PC-3 (cell line): ENCODE measurements at regions of chr17 and their contacts with region 1.

Region 1: GRCh38 chr17:78019367-78019975 is 61.0 kb downstream of the TNRC6C start:
- DNase-seq: peak; percentile 73
- ATAC-seq: peak; percentile 59; the same call in 1 of the 2 replicates
- H3K4me3 ChIP-seq: no peak overlapping the region
- H3K27ac ChIP-seq: no peak overlapping the region
- H3K4me1 ChIP-seq: no peaks in the 10 kb centered on the region
- H3K27me3 ChIP-seq: 0 out of 2 replicates have a peak, but pooled peaks cover 3% of the 10 kb centered on the region
- CTCF ChIP-seq: peak; percentile 80

Region 2: DNA sequence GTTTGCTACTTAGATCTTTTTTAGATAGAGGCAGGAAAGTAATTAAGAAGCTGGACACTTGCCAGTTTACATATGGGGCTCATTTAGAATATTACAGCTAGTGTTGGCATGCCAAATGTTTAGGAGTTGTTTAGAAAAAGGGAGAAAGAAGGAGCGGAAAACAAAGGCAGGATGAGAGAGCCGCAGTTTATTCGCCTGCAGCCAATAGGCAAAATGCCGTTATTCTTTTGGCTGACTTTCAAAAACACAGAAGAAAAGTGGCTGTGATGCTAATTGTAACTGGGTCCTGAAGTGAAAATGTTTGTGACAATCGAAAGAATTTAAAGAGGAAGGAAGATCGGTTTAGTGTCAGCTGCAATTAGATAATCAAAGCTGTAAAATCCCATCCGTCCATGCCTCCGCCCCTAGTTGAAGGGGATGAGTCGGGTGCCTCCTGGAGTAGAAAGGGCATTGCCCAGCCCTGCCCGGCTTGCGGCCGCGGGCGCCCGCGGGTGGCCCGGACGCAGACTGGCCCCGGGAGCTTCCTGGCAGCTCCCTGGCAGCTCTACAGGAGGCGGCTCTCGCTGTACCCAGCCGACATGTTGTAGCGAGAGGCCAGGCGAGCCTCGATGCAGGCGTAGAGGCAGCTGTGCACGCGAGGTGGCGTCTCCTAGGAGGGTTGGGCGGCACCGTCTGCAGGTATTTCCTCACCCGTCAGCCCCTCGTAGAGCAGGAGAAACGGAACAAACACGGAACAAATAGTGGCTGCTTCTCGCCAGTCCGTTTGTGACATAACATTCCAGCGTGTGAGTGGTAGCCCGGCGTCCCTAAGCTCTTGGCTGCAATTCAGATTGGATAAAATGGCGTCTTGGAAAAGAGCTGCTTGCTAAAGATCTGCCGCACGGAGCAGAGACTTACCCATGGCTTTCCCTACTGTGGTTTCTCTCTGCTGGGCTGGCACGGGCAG is 21.2 kb after region 1 on chr17:
- CTCF ChIA-PET with region 1: interaction called, 15 read pairs
- POLR2A ChIA-PET with region 1: no interaction called
- intact Hi-C with region 1: no loop called
- DNase-seq: peak; percentile 80
- ATAC-seq: peak; percentile 93
- H3K4me3 ChIP-seq: peak overlapping the region; percentile 71
- H3K27ac ChIP-seq: peak overlapping the region; percentile 72
- H3K4me1 ChIP-seq: peaks cover 17% of the 10 kb centered on the region
- H3K27me3 ChIP-seq: no peaks in the 10 kb centered on the region
- CTCF ChIP-seq: peak; percentile 41

Region 3: DNA sequence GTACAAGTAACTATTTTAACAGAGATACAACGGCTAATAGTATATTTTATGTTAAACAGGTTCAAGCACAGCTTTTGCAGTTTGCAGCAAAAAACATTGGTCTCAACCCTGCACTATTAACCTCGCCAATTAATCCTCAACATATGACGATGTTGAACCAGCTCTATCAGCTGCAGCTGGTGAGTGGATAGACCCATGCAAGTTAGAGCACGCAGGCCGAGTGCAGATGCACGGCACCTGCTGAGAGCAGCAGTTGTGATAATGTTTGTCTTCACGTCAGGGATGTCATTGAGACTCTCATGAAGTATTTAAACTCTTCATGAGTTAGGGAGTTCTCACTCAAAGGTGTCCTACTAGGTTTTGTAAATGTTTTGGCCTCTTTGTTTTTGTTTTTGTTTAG is 63.5 kb after region 1 on chr17:
- CTCF ChIA-PET with region 1: interaction called, 16 read pairs
- POLR2A ChIA-PET with region 1: no interaction called
- intact Hi-C with region 1: loop called (anchors 1 kb)
- DNase-seq: no peak
- ATAC-seq: no peak
- H3K4me3 ChIP-seq: no peak overlapping the region
- H3K27ac ChIP-seq: no peak overlapping the region
- H3K4me1 ChIP-seq: no peaks in the 10 kb centered on the region
- H3K27me3 ChIP-seq: no peaks in the 10 kb centered on the region
- CTCF ChIP-seq: no peak

Region 4: GRCh38 chr17:78133971-78134898 is 114.8 kb after region 1 on chr17:
- CTCF ChIA-PET with region 1: no interaction called
- POLR2A ChIA-PET with region 1: no interaction called
- intact Hi-C with region 1: loop called (anchors 1 kb)
- DNase-seq: peak; percentile 73
- ATAC-seq: peak; percentile 62
- H3K4me3 ChIP-seq: no peak overlapping the region
- H3K27ac ChIP-seq: no peak overlapping the region
- H3K4me1 ChIP-seq: peaks cover 12% of the 10 kb centered on the region
- H3K27me3 ChIP-seq: no peaks in the 10 kb centered on the region
- CTCF ChIP-seq: peak; percentile 85